ENCODE measurements at regions of chr5 and their contacts with region 1.

Region 1: GRCh38 chr5:107673368-107674136 is 2.8 kb upstream of the EFNA5 start:
- ATAC-seq: peak; percentile 14 to 39 (median 32)
- H3K4me3 ChIP-seq: peak overlapping the region; percentile 53 to 91 (median 70)
- H3K27ac ChIP-seq: peak overlapping the region; percentile 16 to 23
- H3K4me1 ChIP-seq: peaks cover 0 to 3% of the 10 kb centered on the region in 2 donors

Region 2: DNA sequence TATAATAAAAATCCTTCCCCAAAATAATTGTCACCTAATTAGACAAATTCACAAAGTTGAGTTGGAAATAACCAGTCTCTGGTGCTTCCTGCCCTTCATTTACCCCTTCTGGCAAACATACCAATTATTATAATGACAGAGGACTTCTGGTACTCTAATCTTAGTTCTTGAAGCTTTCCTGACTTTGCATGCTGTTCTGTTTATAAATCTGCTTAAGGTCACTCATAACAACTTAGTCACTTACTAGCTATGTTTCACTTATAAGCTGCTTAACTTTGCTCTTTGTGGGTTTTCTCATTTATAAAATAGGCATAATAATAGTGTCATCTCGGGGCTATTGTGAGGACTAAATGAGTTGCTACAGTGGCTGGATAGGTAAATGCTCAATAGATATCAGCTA is 449.3 kb before region 1 on chr5:
- in situ Hi-C with region 1: no loop called
- ATAC-seq: no peak
- H3K4me3 ChIP-seq: no peak overlapping the region
- H3K27ac ChIP-seq: no peak overlapping the region
- H3K4me1 ChIP-seq: no peaks in the 10 kb centered on the region

Region 3: DNA sequence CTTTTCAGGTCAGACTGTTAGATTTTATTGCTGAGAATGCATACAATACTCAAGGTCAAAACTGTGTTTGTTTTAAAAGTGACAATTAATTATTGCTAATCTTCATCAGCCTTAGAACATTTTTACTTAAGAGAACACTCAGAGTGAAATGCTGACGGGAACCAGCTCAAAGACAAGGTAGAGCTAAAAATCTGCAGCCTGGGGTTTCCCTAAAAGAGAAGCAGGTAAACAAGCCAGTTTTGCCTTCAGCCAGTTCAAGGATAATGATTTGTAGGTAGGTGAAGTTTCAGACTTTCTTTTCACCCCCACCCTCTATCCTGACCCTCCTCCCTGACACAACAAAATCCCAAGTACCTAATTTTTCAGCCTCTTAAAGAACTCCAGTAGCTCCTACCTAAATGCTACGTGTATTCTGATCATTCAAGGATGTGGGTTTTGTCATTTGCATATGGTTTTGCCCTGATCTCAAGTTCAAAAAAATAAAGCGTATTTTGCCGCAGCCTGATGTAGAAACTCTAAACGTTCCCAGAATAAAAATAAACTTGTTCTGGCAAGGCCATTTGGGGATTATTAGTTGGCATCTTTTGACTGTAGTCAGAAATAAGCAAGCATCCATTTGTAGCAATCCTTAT is 410.0 kb before region 1 on chr5:
- in situ Hi-C with region 1: no loop called
- ATAC-seq: no peak
- H3K4me3 ChIP-seq: no peak overlapping the region
- H3K27ac ChIP-seq: no peak overlapping the region
- H3K4me1 ChIP-seq: peaks cover 6 to 37% of the 10 kb centered on the region in 2 donors

Region 4: GRCh38 chr5:107474716-107475489 is 198.6 kb before region 1 on chr5:
- in situ Hi-C with region 1: loop called in 1 of 9 experiments (anchors 25 kb)
- ATAC-seq: peak in 1 of 8 experiments; percentile 10
- H3K4me3 ChIP-seq: no peak overlapping the region
- H3K27ac ChIP-seq: no peak overlapping the region
- H3K4me1 ChIP-seq: peaks cover 3 to 6% of the 10 kb centered on the region in 2 donors